Right ventricle myocardium inferior (tissue), 1 donor: ENCODE measurements at regions of chr15 and their contacts with region 1.

Region 1: DNA sequence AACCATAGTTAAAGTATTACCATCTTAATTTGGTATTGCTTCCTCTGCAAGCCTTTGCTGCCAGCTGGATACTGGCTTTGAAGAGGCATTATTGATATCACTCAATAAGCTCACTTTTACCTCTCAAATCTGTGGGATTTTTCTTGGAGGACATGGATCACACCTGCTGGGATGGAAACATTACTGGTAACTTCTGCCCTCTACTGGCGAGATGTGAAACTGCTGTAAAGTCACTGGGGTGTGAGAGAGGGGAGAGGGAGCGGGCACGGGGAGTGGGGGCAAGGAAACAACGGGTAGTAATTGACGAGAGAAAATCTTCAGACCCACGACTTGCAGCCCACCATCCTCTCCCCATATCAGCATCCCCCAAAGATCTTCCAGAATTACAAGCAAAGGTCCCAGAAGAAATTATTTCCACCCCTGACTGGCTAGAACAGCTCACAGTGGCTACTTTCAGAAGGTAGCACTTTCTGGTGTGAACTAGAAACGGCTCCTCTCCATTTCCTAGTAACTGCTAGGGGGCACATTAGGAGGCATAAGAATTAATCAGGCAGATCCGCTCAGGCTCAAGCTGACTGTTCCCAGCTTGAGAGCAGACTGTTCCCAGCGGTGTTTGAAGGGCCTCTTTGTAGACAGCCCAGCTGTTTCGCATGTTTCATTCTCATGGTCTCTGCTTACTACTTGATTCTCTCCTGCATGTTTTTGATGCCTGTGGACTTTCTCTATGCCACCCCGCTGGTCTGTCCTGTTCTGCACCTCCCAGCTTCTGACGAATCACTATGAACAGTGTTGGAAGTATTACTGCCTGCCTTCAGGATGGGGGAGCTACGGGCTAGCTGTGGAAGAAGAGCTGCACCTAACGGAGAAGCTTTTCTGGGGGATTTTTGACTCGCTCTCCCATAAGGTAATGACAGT is 230.4 kb upstream of the CHRM5 start:
- DNase-seq: no peak
- ATAC-seq: peak; percentile 39

Region 2: GRCh38 chr15:33693166-33693800 is 44.7 kb before region 1 on chr15:
- intact Hi-C with region 1: no loop called
- DNase-seq: no peak
- ATAC-seq: no peak

Region 3: GRCh38 chr15:33963831-33964664 is 226.1 kb after region 1 on chr15:
- intact Hi-C with region 1: loop called (anchors 5 kb)
- DNase-seq: no peak
- ATAC-seq: no peak